ENCODE measurements at regions of chr6 and their contacts with region 1.

Region 1: DNA sequence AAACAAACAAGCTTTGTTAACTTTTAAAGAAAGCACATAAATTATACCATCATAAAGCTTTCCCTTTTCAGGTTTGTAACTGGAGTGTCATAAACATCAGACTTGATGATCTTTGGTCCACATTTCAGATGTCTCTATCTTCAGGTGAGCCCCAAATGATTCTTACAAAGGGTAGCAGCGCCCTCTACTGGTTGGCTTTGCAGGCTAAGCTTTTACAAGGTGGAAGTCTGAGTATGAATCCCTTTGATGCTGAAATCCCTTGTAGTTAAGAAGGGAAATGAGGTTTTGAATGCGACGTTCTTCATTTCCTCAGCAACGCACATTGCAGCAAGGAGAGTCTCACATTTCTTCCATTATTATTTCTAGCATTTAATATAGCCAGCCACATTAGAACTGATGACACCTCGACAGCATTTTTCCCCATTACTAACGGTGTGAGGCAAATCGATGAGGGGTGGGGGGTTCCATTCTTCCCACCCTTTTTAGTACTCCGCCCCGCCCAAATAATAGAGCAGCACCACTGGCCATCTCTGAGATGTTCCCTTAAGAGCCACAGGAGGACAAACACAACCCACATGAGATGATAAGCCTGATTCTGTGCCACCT is 126.3 kb upstream of the NT5E start:
- DNase-seq: peak; percentile 85
- H3K4me3 Mint-ChIP-seq: no peak overlapping the region
- H3K27ac Mint-ChIP-seq: no peak overlapping the region
- H3K4me1 Mint-ChIP-seq: no peaks in the 10 kb centered on the region
- H3K27me3 Mint-ChIP-seq: no peaks in the 10 kb centered on the region
- CTCF ChIP-seq: peak; percentile 77

Region 2: GRCh38 chr6:84422380-84422968 is 901.1 kb before region 1 on chr6:
- CTCF ChIA-PET with region 1: interaction called, 5 read pairs
- intact Hi-C with region 1: loop called (anchors 2 kb)
- DNase-seq: peak; percentile 84
- H3K4me3 Mint-ChIP-seq: no peak overlapping the region
- H3K27ac Mint-ChIP-seq: no peak overlapping the region
- H3K4me1 Mint-ChIP-seq: peaks cover 8% of the 10 kb centered on the region
- H3K27me3 Mint-ChIP-seq: no peaks in the 10 kb centered on the region
- CTCF ChIP-seq: peak; percentile 89

Region 3: GRCh38 chr6:84568971-84569370 is 754.6 kb before region 1 on chr6:
- CTCF ChIA-PET with region 1: no interaction called
- intact Hi-C with region 1: loop called (anchors 5 kb)
- DNase-seq: peak; percentile 12
- H3K4me3 Mint-ChIP-seq: no peak overlapping the region
- H3K27ac Mint-ChIP-seq: no peak overlapping the region
- H3K4me1 Mint-ChIP-seq: no peaks in the 10 kb centered on the region
- H3K27me3 Mint-ChIP-seq: no peaks in the 10 kb centered on the region
- CTCF ChIP-seq: peak; percentile 15

Region 4: DNA sequence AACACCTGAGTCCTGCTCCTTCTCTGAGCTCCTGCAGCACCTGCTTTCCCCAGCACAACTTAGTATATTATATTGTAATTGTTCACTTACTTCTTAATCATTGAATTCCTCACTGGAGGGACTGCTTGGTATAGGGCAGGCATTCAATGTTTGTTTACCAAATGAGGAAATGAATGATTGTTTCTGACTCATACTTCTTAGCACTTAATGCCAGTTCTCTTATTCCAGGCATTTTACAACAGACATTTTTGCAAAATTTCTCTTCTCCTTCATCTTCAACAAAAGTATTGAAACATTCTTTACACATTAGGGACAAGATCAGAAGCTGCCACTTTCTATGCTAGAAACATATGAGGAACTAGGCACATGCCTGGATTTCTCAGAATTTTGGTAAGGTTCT is 678.5 kb before region 1 on chr6:
- CTCF ChIA-PET with region 1: no interaction called
- intact Hi-C with region 1: loop called (anchors 10 kb)
- DNase-seq: no peak
- H3K4me3 Mint-ChIP-seq: peak overlapping the region; percentile 43
- H3K27ac Mint-ChIP-seq: peak overlapping the region; percentile 96
- H3K4me1 Mint-ChIP-seq: peaks cover 64% of the 10 kb centered on the region
- H3K27me3 Mint-ChIP-seq: no peaks in the 10 kb centered on the region
- CTCF ChIP-seq: no peak

Region 5: GRCh38 chr6:84779380-84779779 is 544.2 kb before region 1 on chr6:
- CTCF ChIA-PET with region 1: no interaction called
- intact Hi-C with region 1: loop called (anchors 5 kb)
- DNase-seq: no peak
- H3K4me3 Mint-ChIP-seq: no peak overlapping the region
- H3K27ac Mint-ChIP-seq: no peak overlapping the region
- H3K4me1 Mint-ChIP-seq: peaks cover 15% of the 10 kb centered on the region
- H3K27me3 Mint-ChIP-seq: no peaks in the 10 kb centered on the region
- CTCF ChIP-seq: no peak

Region 6: GRCh38 chr6:85023721-85024120 is 299.8 kb before region 1 on chr6:
- CTCF ChIA-PET with region 1: no interaction called
- intact Hi-C with region 1: loop called (anchors 10 kb)
- DNase-seq: no peak
- H3K4me3 Mint-ChIP-seq: no peak overlapping the region
- H3K27ac Mint-ChIP-seq: no peak overlapping the region
- H3K4me1 Mint-ChIP-seq: peaks cover 7% of the 10 kb centered on the region
- H3K27me3 Mint-ChIP-seq: peaks cover 9% of the 10 kb centered on the region
- CTCF ChIP-seq: no peak

Region 7: DNA sequence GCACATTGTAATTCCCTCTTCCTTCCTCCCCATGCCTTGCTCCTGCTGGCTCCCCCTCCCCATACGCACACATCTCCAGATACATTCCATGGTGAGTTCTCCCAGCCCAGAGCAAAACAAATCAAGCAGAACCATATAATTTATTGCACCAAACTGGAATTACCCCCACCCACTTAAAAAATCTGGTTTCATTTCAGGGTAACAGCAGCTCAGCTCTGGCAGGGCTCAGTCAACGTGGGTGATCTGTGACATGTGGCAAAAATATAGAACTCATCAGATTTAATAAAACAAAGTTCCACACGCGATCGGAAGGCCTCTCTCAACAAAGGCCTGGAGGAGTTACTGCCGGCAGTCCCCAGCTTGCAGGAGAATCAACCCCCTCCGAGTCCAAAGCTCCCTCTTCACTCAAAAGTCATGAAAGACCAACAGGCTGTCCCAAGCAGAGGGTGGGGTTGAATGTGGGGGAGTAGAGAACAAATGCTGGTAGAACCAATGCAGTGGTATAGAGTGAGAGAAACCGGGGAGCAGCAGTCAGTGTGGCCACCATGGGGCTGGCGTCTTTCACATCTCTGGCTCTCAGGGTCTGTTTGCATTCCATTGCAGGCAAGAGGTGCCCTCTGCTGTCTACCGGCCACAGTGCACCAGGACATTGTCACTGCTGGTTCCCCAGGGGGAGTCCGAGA is 196.9 kb before region 1 on chr6:
- CTCF ChIA-PET with region 1: interaction called, 5 read pairs
- intact Hi-C with region 1: loop called (anchors 1 kb)
- DNase-seq: peak; percentile 78
- H3K4me3 Mint-ChIP-seq: no peak overlapping the region
- H3K27ac Mint-ChIP-seq: peak overlapping the region; percentile 43
- H3K4me1 Mint-ChIP-seq: peaks cover 15% of the 10 kb centered on the region
- H3K27me3 Mint-ChIP-seq: no peaks in the 10 kb centered on the region
- CTCF ChIP-seq: peak; percentile 81

Region 8: GRCh38 chr6:85261271-85261670 is 62.3 kb before region 1 on chr6:
- CTCF ChIA-PET with region 1: no interaction called
- intact Hi-C with region 1: no loop called
- DNase-seq: no peak
- H3K4me3 Mint-ChIP-seq: no peak overlapping the region
- H3K27ac Mint-ChIP-seq: no peak overlapping the region
- H3K4me1 Mint-ChIP-seq: no peaks in the 10 kb centered on the region
- H3K27me3 Mint-ChIP-seq: no peaks in the 10 kb centered on the region
- CTCF ChIP-seq: no peak